IMR-90 (cell line): ENCODE measurements at regions of chr20 and their contacts with region 1.

Region 1: GRCh38 chr20:31951530-31952453 is at the start of gene PDRG1:
- DNase-seq: peak; percentile 93
- ATAC-seq: peak; percentile 100
- H3K4me3 ChIP-seq: peak within 1 kb of the TSS; percentile 83
- H3K27ac ChIP-seq: peak within 1 kb of the TSS; percentile 66
- H3K4me1 ChIP-seq: peaks cover 6% of the 10 kb centered on the region
- H3K27me3 ChIP-seq: peaks cover 10% of the 10 kb centered on the region
- CTCF ChIP-seq: peak; percentile 98
- POLR2A ChIP-seq: peak; percentile 87
- RAD21 ChIP-seq: peak; percentile 67
- total RNA-seq, gene PDRG1: 5.0 and 5.8 TPM in 2 replicates

Region 2: GRCh38 chr20:31803552-31804291 is 148.1 kb before region 1 on chr20:
- CTCF ChIA-PET with region 1: no interaction called
- POLR2A ChIA-PET with region 1: no interaction called
- dilution Hi-C with region 1: no loop called
- in situ Hi-C with region 1: no loop called
- intact Hi-C with region 1: no loop called
- DNase-seq: no peak
- ATAC-seq: no peak
- H3K4me3 ChIP-seq: no peak overlapping the region
- H3K27ac ChIP-seq: no peak overlapping the region
- H3K4me1 ChIP-seq: no peaks in the 10 kb centered on the region
- H3K27me3 ChIP-seq: no peaks in the 10 kb centered on the region
- CTCF ChIP-seq: no peak
- POLR2A ChIP-seq: no peak
- RAD21 ChIP-seq: no peak

Region 3: GRCh38 chr20:31849455-31849925 is 102.3 kb before region 1 on chr20:
- CTCF ChIA-PET with region 1: interaction called, 6 read pairs
- POLR2A ChIA-PET with region 1: no interaction called
- dilution Hi-C with region 1: no loop called
- in situ Hi-C with region 1: loop called (anchors 10 kb)
- intact Hi-C with region 1: loop called (anchors 2 kb)
- DNase-seq: no peak
- ATAC-seq: no peak
- H3K4me3 ChIP-seq: no peak overlapping the region
- H3K27ac ChIP-seq: no peak overlapping the region
- H3K4me1 ChIP-seq: no peaks in the 10 kb centered on the region
- H3K27me3 ChIP-seq: peaks cover 60% of the 10 kb centered on the region
- CTCF ChIP-seq: no peak
- POLR2A ChIP-seq: no peak
- RAD21 ChIP-seq: no peak

Region 4: DNA sequence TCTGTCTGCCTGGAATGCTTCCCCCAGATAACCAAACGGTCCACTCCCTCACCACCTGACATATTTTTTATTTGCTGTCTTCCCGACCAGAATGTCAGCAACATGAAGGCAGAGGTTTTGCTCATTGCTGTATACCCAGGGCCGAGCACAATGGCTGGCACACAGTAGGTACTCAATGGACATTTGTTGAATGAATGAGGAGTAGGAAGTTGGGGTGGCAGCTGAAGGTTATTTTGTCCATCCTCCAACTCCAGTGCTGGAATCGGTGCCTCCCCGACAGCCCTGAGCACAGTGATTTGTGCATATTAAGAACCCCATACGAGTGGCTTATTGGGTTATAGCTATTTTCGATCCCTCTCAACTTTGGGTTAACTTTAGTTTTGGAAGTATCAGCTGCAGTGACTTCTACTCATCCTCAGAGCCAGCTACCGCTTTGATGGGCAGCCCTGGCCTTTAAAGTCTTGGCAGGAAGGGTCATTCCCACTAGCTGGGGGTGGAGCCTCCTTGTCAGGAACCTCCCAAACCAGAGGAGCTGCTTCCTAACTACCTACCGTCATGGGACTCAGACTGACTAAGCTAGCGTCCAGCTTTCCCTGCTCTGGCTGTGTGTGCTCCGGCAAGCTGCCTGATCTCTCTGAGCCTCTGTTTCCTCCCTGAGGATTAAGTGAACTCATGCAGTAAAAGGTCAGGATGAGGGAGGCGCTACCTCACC is 91.6 kb before region 1 on chr20:
- CTCF ChIA-PET with region 1: interaction called, 3 read pairs
- POLR2A ChIA-PET with region 1: no interaction called
- dilution Hi-C with region 1: no loop called
- in situ Hi-C with region 1: loop called (anchors 10 kb)
- intact Hi-C with region 1: no loop called
- DNase-seq: no peak
- ATAC-seq: no peak
- H3K4me3 ChIP-seq: no peak overlapping the region
- H3K27ac ChIP-seq: no peak overlapping the region
- H3K4me1 ChIP-seq: peaks cover 2% of the 10 kb centered on the region; the same call in 1 of the 2 replicates
- H3K27me3 ChIP-seq: peaks cover 85% of the 10 kb centered on the region
- CTCF ChIP-seq: no peak
- POLR2A ChIP-seq: no peak
- RAD21 ChIP-seq: no peak

Region 5: GRCh38 chr20:32091888-32092346 is 140.1 kb after region 1 on chr20:
- CTCF ChIA-PET with region 1: interaction called, 4 read pairs
- POLR2A ChIA-PET with region 1: no interaction called
- dilution Hi-C with region 1: no loop called
- in situ Hi-C with region 1: no loop called
- intact Hi-C with region 1: loop called (anchors 1 kb)
- DNase-seq: peak; percentile 72
- ATAC-seq: peak; percentile 99
- H3K4me3 ChIP-seq: no peak overlapping the region
- H3K27ac ChIP-seq: no peak overlapping the region
- H3K4me1 ChIP-seq: no peaks in the 10 kb centered on the region; the same call in 1 of the 2 replicates
- H3K27me3 ChIP-seq: peaks cover 43% of the 10 kb centered on the region
- CTCF ChIP-seq: peak; percentile 94
- POLR2A ChIP-seq: no peak
- RAD21 ChIP-seq: peak; percentile 91